A673 (cell line): ENCODE measurements at regions of chr10 and their contacts with region 1.

Region 1: GRCh38 chr10:35993591-35994515 is 351.8 kb upstream of the FZD8 start:
- DNase-seq: no peak
- H3K4me3 ChIP-seq: no peak overlapping the region
- H3K27ac ChIP-seq: no peak overlapping the region
- H3K4me1 ChIP-seq: no peaks in the 10 kb centered on the region
- H3K27me3 ChIP-seq: no peaks in the 10 kb centered on the region
- CTCF ChIP-seq: no peak

Region 2: GRCh38 chr10:36692759-36693158 is 698.9 kb after region 1 on chr10:
- CTCF ChIA-PET with region 1: no interaction called
- POLR2A ChIA-PET with region 1: interaction called, 11 read pairs
- intact Hi-C with region 1: no loop called
- DNase-seq: no peak
- H3K4me3 ChIP-seq: no peak overlapping the region
- H3K27ac ChIP-seq: no peak overlapping the region
- H3K4me1 ChIP-seq: no peaks in the 10 kb centered on the region
- H3K27me3 ChIP-seq: no peaks in the 10 kb centered on the region
- CTCF ChIP-seq: no peak